ENCODE measurements at regions of chr6 and their contacts with region 1.

Region 1: DNA sequence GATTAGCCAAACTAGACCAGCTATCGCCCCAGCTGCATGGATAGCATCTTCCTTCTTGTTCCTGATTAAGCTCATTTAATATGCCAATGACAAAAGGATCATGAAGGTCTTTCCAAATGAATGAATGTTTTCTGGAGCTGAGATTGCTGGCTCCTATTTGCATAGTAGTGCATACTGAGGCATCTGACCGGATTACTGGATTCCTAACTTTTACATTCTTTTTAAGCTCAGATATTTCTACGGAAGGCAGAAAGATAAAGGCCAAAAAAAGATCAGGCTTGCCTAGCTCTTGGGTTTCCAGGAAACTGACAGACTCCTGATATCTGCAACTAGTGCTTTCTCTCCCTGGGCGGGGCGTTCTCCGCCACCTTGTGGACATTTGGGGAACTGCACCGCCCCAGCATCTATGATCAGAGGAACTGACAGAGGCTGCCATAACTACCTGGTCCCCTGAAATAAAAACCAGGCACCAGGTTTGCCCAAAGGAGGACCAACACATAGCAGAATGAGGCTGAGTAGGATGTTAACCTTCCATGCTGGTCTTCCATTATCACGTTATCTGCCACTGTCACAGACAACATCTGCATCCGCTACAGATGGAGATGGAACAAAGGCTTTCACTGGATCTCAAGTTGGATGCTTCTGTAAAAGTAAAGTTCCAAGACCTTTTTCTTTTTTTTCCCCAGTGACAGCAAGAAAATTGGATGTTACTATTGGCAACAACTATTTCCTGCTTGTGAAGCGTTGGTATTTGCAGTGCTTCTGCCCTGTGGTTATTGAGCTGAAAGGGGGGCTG is 33.2 kb downstream of the NT5E start:
- DNase-seq: peak; percentile 97
- H3K4me3 ChIP-seq: peak overlapping the region in 1 of 4 donors; percentile 7
- H3K27ac ChIP-seq: peak overlapping the region in 3 of 4 donors; percentile 3 to 40 (median 22)
- H3K4me1 ChIP-seq: peaks cover 7 to 9% (median 8%) of the 10 kb centered on the region in 4 donors
- H3K27me3 ChIP-seq: no peaks in the 10 kb centered on the region
- CTCF ChIP-seq: peak in 2 of 3 experiments; percentile 97 to 100
- EP300 ChIP-seq: no peak
- POLR2A ChIP-seq: no peak

Region 2: DNA sequence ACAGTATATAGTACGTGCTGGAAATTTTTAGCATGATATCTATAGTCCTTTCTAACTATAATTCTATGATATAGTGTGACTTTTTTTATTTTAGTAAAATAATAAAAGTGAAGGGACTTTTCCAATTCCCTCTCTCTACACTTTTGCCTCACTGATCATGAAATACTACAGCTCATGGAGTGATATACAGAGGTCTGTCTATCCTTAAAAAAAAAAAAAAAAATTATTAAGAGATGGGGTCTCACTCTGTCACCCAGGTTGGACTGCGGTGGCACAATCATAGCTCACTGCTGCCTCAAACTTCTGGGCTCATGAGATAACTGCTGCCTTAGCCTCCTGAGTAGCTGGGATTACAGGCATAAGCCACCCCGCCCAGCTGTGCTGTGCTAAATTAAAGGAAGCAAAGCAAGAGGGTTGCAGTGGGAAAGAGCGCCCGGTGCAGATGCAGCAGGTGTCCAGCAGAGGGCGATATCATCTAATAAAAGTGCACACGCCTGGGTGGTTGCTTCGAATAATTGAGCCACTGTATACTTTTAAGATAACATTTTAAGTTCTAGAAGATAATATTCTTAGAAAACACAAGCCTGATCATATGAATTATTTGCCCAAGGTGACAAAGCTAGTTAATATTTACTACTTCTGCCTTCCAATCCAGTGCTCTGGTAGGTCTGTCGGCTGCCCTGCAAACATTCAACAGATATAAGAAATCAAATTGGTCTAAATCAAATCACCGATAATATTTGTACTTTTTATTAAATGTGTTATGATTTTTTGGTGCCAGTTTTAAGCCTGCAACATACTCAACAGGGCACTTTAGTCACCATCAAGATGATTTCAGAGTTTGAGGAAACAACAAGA is 128.1 kb before region 1 on chr6:
- intact Hi-C with region 1: loop called (anchors 2 kb)
- DNase-seq: no peak
- H3K4me3 ChIP-seq: no peak overlapping the region
- H3K27ac ChIP-seq: no peak overlapping the region
- H3K4me1 ChIP-seq: peaks cover 0 to 3% (median 0%) of the 10 kb centered on the region in 4 donors
- H3K27me3 ChIP-seq: no peaks in the 10 kb centered on the region
- CTCF ChIP-seq: peak; percentile 95 to 97 (median 96)
- EP300 ChIP-seq: no peak
- POLR2A ChIP-seq: no peak

Measured in esophagus muscularis mucosa (tissue), 4 donors.